Caco-2 (cell line): ENCODE measurements at regions of chr9 and their contacts with region 1.

Region 1: DNA sequence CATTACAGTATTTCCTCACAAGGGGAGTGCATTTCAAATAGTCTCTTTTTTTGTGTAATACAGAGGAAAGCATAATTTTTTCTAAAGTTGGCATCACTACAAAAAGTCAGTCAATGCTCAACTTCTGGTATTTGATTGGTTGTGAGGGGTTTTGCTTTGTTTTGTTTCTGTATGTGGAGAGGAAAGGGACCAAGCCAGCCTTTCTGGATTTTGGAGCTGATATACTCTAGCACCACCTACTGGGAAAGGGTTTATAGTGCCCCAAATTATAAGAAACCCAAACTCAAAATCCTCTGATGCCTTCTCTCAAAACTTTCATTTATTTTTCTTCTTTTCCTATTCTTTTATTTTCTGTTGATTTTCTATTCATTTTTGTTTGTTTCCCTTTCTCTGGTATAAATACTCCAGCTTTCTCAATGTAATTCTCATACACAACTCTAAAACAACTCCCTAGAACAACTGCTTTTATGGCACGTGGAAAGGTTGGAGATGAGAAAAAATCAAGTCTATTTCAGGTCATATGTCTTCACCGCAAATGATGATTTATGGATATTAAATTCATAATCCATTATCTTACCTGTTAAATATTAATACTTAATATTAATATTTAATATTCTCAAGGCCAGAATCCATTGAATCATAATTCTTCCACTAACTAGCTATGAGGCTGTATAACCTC is 69.5 kb upstream of the ANXA1 start:
- DNase-seq: peak in 1 of 2 experiments; percentile 0
- H3K4me3 ChIP-seq: no peak overlapping the region
- H3K4me3 Mint-ChIP-seq: no peak overlapping the region
- H3K27ac Mint-ChIP-seq: no peak overlapping the region
- H3K4me1 ChIP-seq: no peaks in the 10 kb centered on the region
- H3K4me1 Mint-ChIP-seq: no peaks in the 10 kb centered on the region
- H3K27me3 ChIP-seq: no peaks in the 10 kb centered on the region
- H3K27me3 Mint-ChIP-seq: no peaks in the 10 kb centered on the region
- CTCF ChIP-seq: peak; percentile 29 to 35

Region 2: DNA sequence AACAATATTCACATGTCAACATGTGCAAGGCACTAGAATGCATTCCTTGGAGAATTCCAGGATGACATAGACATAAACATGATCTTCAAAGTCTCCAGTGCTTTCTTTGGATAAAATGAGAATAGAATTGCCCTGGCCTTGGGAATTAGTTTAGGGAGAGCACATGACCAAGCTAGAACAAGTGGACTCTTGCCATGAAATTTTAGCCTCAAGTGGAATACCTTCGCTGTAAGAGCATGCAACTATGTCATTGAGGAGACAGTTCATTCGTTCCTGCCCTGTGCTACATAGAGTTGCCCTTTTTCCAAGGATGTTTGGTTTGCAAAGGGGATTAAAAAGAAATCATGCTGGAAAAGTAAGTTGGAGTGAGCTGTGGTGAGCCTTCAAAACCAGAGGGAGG is 759.9 kb before region 1 on chr9:
- CTCF ChIA-PET with region 1: no interaction called
- POLR2A ChIA-PET with region 1: no interaction called
- intact Hi-C with region 1: no loop called
- DNase-seq: no peak
- H3K4me3 ChIP-seq: no peak overlapping the region
- H3K4me3 Mint-ChIP-seq: no peak overlapping the region
- H3K27ac Mint-ChIP-seq: no peak overlapping the region
- H3K4me1 ChIP-seq: no peaks in the 10 kb centered on the region
- H3K4me1 Mint-ChIP-seq: no peaks in the 10 kb centered on the region
- H3K27me3 ChIP-seq: no peaks in the 10 kb centered on the region
- H3K27me3 Mint-ChIP-seq: no peaks in the 10 kb centered on the region
- CTCF ChIP-seq: no peak

Region 3: GRCh38 chr9:72871685-72872084 is 210.4 kb before region 1 on chr9:
- CTCF ChIA-PET with region 1: no interaction called
- POLR2A ChIA-PET with region 1: no interaction called
- intact Hi-C with region 1: loop called (anchors 1 kb)
- DNase-seq: no peak
- H3K4me3 ChIP-seq: no peak overlapping the region
- H3K4me3 Mint-ChIP-seq: no peak overlapping the region
- H3K27ac Mint-ChIP-seq: no peak overlapping the region
- H3K4me1 ChIP-seq: no peaks in the 10 kb centered on the region
- H3K4me1 Mint-ChIP-seq: no peaks in the 10 kb centered on the region
- H3K27me3 ChIP-seq: no peaks in the 10 kb centered on the region
- H3K27me3 Mint-ChIP-seq: no peaks in the 10 kb centered on the region
- CTCF ChIP-seq: no peak

Region 4: GRCh38 chr9:73200694-73201452 is 118.8 kb after region 1 on chr9:
- CTCF ChIA-PET with region 1: no interaction called
- POLR2A ChIA-PET with region 1: no interaction called
- intact Hi-C with region 1: no loop called
- DNase-seq: no peak
- H3K4me3 ChIP-seq: no peak overlapping the region
- H3K4me3 Mint-ChIP-seq: no peak overlapping the region
- H3K27ac Mint-ChIP-seq: no peak overlapping the region
- H3K4me1 ChIP-seq: no peaks in the 10 kb centered on the region
- H3K4me1 Mint-ChIP-seq: no peaks in the 10 kb centered on the region
- H3K27me3 ChIP-seq: no peaks in the 10 kb centered on the region
- H3K27me3 Mint-ChIP-seq: no peaks in the 10 kb centered on the region
- CTCF ChIP-seq: peak in 1 of 2 experiments; percentile 19